ENCODE measurements at regions of chr2 and their contacts with region 1.

Region 1: GRCh38 chr2:30208452-30208851 is 22.9 kb upstream of the LBH start:
- DNase-seq: no peak
- ATAC-seq: peak; percentile 90

Region 2: DNA sequence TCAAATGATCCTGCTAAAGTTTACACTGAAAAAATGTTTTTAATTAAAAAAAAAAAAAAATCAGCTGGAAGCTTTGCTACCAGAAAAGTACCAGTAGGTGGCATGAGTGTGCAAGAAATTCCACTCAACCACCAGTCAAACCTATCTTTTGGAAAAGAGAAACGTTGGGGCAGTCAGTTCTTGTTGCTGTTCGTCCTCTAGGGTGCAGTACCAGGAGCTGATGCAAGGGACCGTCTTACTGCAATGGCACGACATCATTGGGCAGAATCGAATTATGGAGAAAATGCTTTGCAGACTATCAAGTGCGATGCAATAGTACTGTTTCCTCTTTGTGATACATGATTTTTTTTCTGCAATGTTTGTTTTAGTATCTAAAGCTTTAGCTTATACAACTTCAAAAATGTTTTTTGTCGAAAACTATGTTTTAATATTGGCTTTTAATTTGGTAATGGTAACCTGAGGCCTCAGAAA is 43.4 kb before region 1 on chr2:
- intact Hi-C with region 1: loop called (anchors 5 kb)
- DNase-seq: no peak
- ATAC-seq: peak; percentile 82

Region 3: GRCh38 chr2:30691948-30692828 is 483.7 kb after region 1 on chr2:
- intact Hi-C with region 1: loop called (anchors 5 kb)
- DNase-seq: peak; percentile 65
- ATAC-seq: peak; percentile 49

Measured in Right ventricle myocardium inferior (tissue), 1 donor.